ENCODE measurements at regions of chr5 and their contacts with region 1.

Region 1: DNA sequence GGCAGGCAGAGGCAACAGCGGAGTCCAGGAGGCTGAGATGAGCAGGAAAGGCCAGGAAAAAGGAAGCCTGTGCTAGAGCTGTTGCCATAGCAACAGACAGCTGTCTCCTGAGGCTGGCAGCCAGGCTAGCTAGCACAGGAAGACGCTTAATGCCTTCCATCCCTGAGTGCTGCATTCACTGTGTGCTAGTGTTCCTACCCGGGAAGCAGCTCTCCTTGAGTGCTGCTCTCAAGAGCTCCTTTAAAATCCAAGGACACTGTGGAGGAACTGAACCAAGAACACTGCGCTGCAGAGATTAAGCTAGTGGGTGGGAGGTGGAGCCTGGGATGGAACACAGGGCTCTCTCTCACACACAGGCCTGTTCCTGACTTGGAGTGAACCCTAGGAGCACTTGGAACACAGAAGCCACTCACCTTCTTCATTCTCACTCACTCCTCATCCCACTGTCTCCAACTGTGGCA is 53.5 kb upstream of the IL7R start:
- DNase-seq: peak in 3 of 5 donors; percentile 40 to 60 (median 50)
- H3K4me3 ChIP-seq: peak overlapping the region in 1 of 2 donors; percentile 11
- H3K4me3 Mint-ChIP-seq: peak overlapping the region in 7 of 8 donors; percentile 58 to 80 (median 68)
- H3K27ac ChIP-seq: peak overlapping the region; percentile 46
- H3K27ac Mint-ChIP-seq: peak overlapping the region; percentile 66 to 93 (median 91)
- H3K4me1 ChIP-seq: peaks cover 67% of the 10 kb centered on the region
- H3K4me1 Mint-ChIP-seq: peaks cover 53 to 88% (median 71%) of the 10 kb centered on the region in 4 donors
- H3K27me3 ChIP-seq: no peaks in the 10 kb centered on the region
- H3K27me3 Mint-ChIP-seq: no peaks in the 10 kb centered on the region

Region 2: GRCh38 chr5:35785601-35786085 is 17.6 kb before region 1 on chr5:
- CTCF ChIA-PET with region 1: interaction called, 6 read pairs
- POLR2A ChIA-PET with region 1: interaction called, 119 read pairs
- intact Hi-C with region 1: no loop called
- DNase-seq: peak in 1 of 5 donors; percentile 44
- H3K4me3 ChIP-seq: no peak overlapping the region
- H3K4me3 Mint-ChIP-seq: peak overlapping the region in 7 of 8 donors; percentile 6 to 78 (median 65)
- H3K27ac ChIP-seq: no peak overlapping the region
- H3K27ac Mint-ChIP-seq: peak overlapping the region; percentile 45 to 94 (median 67)
- H3K4me1 ChIP-seq: peaks cover 83% of the 10 kb centered on the region
- H3K4me1 Mint-ChIP-seq: peaks cover 53 to 91% (median 76%) of the 10 kb centered on the region in 4 donors
- H3K27me3 ChIP-seq: no peaks in the 10 kb centered on the region
- H3K27me3 Mint-ChIP-seq: no peaks in the 10 kb centered on the region

Region 3: DNA sequence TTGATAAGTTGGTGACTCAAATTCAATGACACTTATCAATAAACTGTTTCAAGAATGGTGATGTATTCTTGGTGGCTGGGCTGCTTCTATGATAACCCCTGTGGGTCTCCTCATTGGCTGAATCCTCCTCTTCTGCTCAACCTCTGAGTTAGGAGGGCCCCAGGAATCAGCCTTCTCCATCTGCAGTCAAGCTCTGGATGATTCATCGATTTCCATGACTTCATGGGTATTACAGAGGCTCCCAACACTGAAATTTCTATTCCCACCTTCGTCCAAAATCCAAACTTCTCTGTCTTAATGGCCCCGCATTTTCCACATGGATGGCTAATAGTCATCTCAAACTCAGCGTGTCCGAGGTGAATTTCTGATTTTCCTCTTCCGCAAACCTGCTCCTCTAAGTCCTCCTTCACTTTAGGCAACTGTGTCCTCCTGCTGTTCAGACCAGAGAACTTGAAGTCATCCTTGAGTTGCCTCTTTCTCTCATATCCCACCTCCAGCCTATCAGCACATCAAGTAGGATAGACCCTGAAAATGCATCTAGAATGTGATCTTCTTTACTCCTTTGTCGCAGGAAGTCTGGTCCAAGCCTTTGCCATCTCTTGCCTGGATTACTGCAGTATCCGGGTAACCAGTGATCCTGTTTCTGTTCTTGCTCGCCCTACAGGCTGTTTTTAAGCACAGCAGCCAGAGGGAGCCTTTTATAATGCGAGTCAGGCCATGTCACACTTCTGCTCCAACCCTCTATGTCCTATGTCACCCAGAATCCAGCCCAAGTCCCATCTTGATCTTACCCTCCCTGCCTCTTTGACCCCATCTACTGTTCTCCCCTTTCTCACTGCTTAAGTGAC is 12.1 kb after region 1 on chr5:
- CTCF ChIA-PET with region 1: interaction called, 9 read pairs
- POLR2A ChIA-PET with region 1: interaction called, 119 read pairs
- intact Hi-C with region 1: no loop called
- DNase-seq: peak in 3 of 5 donors; percentile 51 to 55 (median 53)
- H3K4me3 ChIP-seq: peak overlapping the region in 1 of 2 donors; percentile 26
- H3K4me3 Mint-ChIP-seq: no peak overlapping the region
- H3K27ac ChIP-seq: peak overlapping the region; percentile 47
- H3K27ac Mint-ChIP-seq: no peak overlapping the region
- H3K4me1 ChIP-seq: peaks cover 97% of the 10 kb centered on the region
- H3K4me1 Mint-ChIP-seq: peaks cover 32 to 43% (median 36%) of the 10 kb centered on the region in 4 donors
- H3K27me3 ChIP-seq: no peaks in the 10 kb centered on the region
- H3K27me3 Mint-ChIP-seq: no peaks in the 10 kb centered on the region

Region 4: GRCh38 chr5:35822511-35822910 is 19.3 kb after region 1 on chr5:
- CTCF ChIA-PET with region 1: interaction called, 8 read pairs
- POLR2A ChIA-PET with region 1: interaction called, 31 read pairs
- intact Hi-C with region 1: no loop called
- DNase-seq: peak; percentile 59 to 70 (median 66)
- H3K4me3 ChIP-seq: peak overlapping the region in 1 of 2 donors; percentile 11
- H3K4me3 Mint-ChIP-seq: peak overlapping the region; percentile 27 to 95 (median 72)
- H3K27ac ChIP-seq: peak overlapping the region; percentile 46
- H3K27ac Mint-ChIP-seq: peak overlapping the region; percentile 74 to 98 (median 92)
- H3K4me1 ChIP-seq: peaks cover 99% of the 10 kb centered on the region
- H3K4me1 Mint-ChIP-seq: peaks cover 77 to 91% (median 84%) of the 10 kb centered on the region in 4 donors
- H3K27me3 ChIP-seq: no peaks in the 10 kb centered on the region
- H3K27me3 Mint-ChIP-seq: no peaks in the 10 kb centered on the region

Region 5: GRCh38 chr5:35852084-35852734 is 49.0 kb after region 1 on chr5:
- CTCF ChIA-PET with region 1: interaction called, 3 read pairs
- POLR2A ChIA-PET with region 1: interaction called, 1,081 read pairs
- intact Hi-C with region 1: no loop called
- DNase-seq: peak; percentile 60 to 81 (median 62)
- H3K4me3 ChIP-seq: peak overlapping the region; percentile 54 to 71
- H3K4me3 Mint-ChIP-seq: peak overlapping the region; percentile 87 to 99 (median 95)
- H3K27ac ChIP-seq: peak overlapping the region; percentile 97
- H3K27ac Mint-ChIP-seq: peak overlapping the region; percentile 94 to 100 (median 100)
- H3K4me1 ChIP-seq: peaks cover 75% of the 10 kb centered on the region
- H3K4me1 Mint-ChIP-seq: peaks cover 52 to 85% (median 70%) of the 10 kb centered on the region in 4 donors
- H3K27me3 ChIP-seq: no peaks in the 10 kb centered on the region
- H3K27me3 Mint-ChIP-seq: no peaks in the 10 kb centered on the region

Region 6: DNA sequence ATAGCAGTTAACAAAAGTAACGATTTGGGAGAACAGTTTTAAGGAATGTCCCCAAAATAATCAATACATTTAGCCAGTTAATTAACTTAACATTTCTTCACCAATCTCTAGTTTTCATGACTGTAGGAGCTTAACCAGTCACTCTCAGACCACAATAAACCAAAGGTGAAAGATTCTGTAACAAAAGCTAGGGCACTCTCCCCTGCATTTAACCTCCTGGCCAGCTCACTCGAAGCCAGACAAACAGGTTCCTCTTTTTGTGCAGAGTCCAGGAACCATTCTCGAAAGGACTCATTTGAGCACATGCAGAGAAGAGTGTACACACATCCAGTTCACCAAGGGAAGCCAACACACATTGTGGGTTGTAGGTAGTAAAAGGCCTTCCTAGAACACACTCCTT is 59.9 kb after region 1 on chr5:
- CTCF ChIA-PET with region 1: interaction called, 6 read pairs
- POLR2A ChIA-PET with region 1: interaction called, 1,081 read pairs
- intact Hi-C with region 1: no loop called
- DNase-seq: peak in 2 of 5 donors; percentile 13 to 58
- H3K4me3 ChIP-seq: peak overlapping the region; percentile 82 to 85
- H3K4me3 Mint-ChIP-seq: peak overlapping the region; percentile 91 to 98 (median 96)
- H3K27ac ChIP-seq: peak overlapping the region; percentile 97
- H3K27ac Mint-ChIP-seq: peak overlapping the region; percentile 82 to 98 (median 95)
- H3K4me1 ChIP-seq: peaks cover 64% of the 10 kb centered on the region
- H3K4me1 Mint-ChIP-seq: peaks cover 43 to 81% (median 57%) of the 10 kb centered on the region in 4 donors
- H3K27me3 ChIP-seq: no peaks in the 10 kb centered on the region
- H3K27me3 Mint-ChIP-seq: no peaks in the 10 kb centered on the region

Region 7: GRCh38 chr5:35869685-35870277 is 66.6 kb after region 1 on chr5:
- CTCF ChIA-PET with region 1: no interaction called
- POLR2A ChIA-PET with region 1: interaction called, 454 read pairs
- intact Hi-C with region 1: no loop called
- DNase-seq: no peak
- H3K4me3 ChIP-seq: no peak overlapping the region
- H3K4me3 Mint-ChIP-seq: peak overlapping the region in 7 of 8 donors; percentile 25 to 96 (median 61)
- H3K27ac ChIP-seq: peak overlapping the region; percentile 33
- H3K27ac Mint-ChIP-seq: peak overlapping the region; percentile 65 to 94 (median 86)
- H3K4me1 ChIP-seq: peaks cover 75% of the 10 kb centered on the region
- H3K4me1 Mint-ChIP-seq: peaks cover 68 to 88% (median 79%) of the 10 kb centered on the region in 4 donors
- H3K27me3 ChIP-seq: no peaks in the 10 kb centered on the region
- H3K27me3 Mint-ChIP-seq: no peaks in the 10 kb centered on the region

Measured in CD4-positive, alpha-beta memory T cell (primary cell).